ENCODE measurements at regions of chr9 and their contacts with region 1.

Region 1: DNA sequence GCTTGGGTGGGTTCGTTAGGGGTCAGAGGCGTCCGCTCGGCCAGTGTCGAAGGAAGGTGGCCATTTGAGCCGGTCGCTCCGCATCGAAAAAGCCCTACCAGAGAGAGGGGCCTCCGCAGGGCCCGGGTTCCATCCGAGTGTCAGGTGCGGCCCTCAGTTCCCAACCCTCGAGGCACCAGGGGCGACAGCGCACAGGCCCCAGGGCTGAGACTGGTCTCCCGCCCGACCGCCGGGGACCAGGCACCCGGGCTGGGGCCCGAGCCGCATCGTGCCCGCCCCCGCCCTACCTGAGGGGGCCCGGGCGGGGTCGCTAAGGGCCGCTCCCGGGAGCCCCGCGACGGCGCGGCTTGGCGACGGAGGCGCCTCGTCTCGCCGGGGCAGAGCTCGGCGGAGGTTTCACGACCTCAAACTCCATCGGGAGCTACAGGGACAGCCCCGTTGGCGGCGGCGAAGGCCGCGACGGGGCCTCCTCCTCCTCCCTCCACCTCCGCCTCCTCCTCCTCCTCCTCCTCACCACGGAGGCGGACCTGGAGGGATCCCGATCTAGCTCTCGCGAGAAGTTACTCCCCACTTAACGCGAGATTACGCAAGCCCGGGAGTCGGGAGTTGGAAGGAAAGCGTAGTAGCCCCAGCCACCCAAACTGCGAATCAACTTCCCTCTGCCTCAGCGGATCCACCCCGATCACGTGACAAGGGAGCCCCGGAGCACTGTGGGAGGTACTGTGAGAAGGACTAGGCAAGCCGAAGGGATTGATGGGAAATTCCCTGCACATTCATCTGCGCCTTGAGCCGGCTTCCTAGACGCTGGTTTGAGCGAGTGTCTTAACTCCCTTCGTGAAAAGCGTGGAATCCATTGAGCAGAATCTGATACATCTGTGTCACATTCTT is at the start of gene RC3H2:
- DNase-seq: peak; percentile 99
- H3K4me3 ChIP-seq: peak within 1 kb of the TSS; percentile 100
- H3K27ac ChIP-seq: peak within 1 kb of the TSS; percentile 82 to 83
- H3K4me1 ChIP-seq: peaks cover 2% of the 10 kb centered on the region
- H3K27me3 ChIP-seq: no peaks in the 10 kb centered on the region
- CTCF ChIP-seq: peak in 2 of 3 donors; percentile 23 to 28
- EP300 ChIP-seq: no peak
- POLR2A ChIP-seq: peak; percentile 93
- total RNA-seq, gene RC3H2: 24.9 to 40.9 (median 32.0) TPM

Region 2: DNA sequence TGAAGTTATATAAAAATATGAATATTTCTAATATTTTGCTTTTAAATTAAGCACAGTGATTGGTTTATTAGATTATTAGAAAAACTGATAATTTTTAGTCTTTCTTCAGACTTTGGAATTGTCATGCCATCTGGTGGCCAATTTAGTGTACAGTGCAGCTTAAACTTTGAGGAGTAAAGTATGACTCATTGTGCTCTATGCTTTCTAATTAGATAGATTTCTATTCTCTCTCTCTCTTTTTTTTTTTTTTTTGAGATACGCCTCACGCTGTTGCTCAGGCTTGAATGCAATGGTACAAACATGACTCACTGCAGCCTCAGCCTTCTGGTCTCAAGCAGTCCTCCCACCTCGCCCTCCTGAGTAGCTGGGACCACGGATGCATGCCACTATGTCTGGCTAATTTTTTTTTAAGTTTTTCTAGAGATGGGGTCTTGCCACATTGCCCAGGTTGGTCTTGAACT is 86.3 kb after region 1 on chr9:
- intact Hi-C with region 1: loop called in 1 of 4 experiments (anchors 10 kb)
- DNase-seq: peak in 4 of 5 donors; percentile 28 to 50 (median 32)
- H3K4me3 ChIP-seq: no peak overlapping the region
- H3K27ac ChIP-seq: no peak overlapping the region
- H3K4me1 ChIP-seq: no peaks in the 10 kb centered on the region
- H3K27me3 ChIP-seq: no peaks in the 10 kb centered on the region
- CTCF ChIP-seq: peak in 2 of 3 donors; percentile 59 to 64
- EP300 ChIP-seq: no peak
- POLR2A ChIP-seq: no peak

Region 3: DNA sequence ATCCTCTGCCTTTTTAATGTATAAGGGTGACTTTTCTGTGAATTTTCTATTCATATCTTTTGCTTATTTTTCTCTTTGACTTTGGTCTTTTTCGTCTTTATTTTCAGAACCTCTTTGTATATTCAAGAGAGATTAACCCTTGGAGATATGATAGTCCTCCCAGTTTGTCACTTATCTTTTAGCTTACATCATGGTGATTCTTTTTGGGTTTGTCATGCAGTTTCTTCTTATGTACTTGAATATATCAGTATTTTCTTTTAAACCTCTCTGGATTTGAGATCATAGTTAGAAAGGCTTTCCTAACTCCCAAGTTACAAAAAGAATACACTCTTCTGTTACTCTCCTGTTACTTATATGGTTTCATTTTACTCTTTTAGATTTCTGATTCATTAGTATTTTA is 100.9 kb after region 1 on chr9:
- intact Hi-C with region 1: no loop called
- DNase-seq: no peak
- H3K4me3 ChIP-seq: no peak overlapping the region
- H3K27ac ChIP-seq: no peak overlapping the region
- H3K4me1 ChIP-seq: peaks cover 4% of the 10 kb centered on the region
- H3K27me3 ChIP-seq: no peaks in the 10 kb centered on the region
- CTCF ChIP-seq: no peak
- EP300 ChIP-seq: no peak
- POLR2A ChIP-seq: no peak